Activated naive CD4-positive, alpha-beta T cell treated with anti-CD3 and anti-CD28 coated beads, Interleukin-2, amount 10 ng/mL, durations not matched to agents 7 days and 5 days (primary cell): ENCODE measurements at regions of chr3 and their contacts with region 1.

Region 1: DNA sequence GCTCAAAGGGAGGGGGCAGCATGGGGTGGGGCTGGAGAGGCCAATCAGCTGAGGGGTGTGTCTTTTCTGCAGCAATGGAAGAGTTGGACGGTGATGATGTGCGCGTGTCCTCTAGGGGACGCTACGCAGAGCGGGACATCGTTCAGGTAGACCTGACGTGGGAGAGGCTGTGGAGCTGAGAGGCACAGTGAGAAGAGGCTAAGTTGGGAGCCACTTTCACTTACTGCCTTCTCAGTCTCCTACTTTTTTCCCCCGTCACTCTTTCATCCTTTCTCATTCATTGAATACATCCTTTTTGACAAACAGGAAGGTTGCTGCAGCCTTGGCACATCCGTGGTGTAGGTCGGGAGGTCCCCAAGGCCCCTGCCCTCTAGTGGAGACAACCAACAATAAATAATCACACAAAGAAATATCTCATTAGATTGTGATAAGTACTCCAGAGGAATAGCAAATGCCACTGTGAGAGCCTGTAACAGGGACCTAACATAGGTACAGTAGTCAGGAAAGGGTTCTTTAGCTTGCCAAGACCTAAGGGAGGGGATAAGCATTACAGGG is 4.4 kb upstream of the BRPF1 start:
- DNase-seq: peak; percentile 71
- H3K4me3 Mint-ChIP-seq: peak overlapping the region; percentile 60
- H3K27ac Mint-ChIP-seq: peak overlapping the region; percentile 30
- H3K4me1 Mint-ChIP-seq: peaks cover 31% of the 10 kb centered on the region
- H3K27me3 Mint-ChIP-seq: peaks cover 31% of the 10 kb centered on the region

Region 2: GRCh38 chr3:9224490-9224889 is 502.6 kb before region 1 on chr3:
- CTCF ChIA-PET with region 1: no interaction called
- DNase-seq: peak; percentile 31
- H3K4me3 Mint-ChIP-seq: no peak overlapping the region
- H3K27ac Mint-ChIP-seq: no peak overlapping the region
- H3K4me1 Mint-ChIP-seq: peaks cover 28% of the 10 kb centered on the region
- H3K27me3 Mint-ChIP-seq: no peaks in the 10 kb centered on the region

Region 3: GRCh38 chr3:9503283-9503682 is 223.8 kb before region 1 on chr3:
- CTCF ChIA-PET with region 1: interaction called, 20 read pairs
- DNase-seq: peak; percentile 85
- H3K4me3 Mint-ChIP-seq: no peak overlapping the region
- H3K27ac Mint-ChIP-seq: no peak overlapping the region
- H3K4me1 Mint-ChIP-seq: peaks cover 2% of the 10 kb centered on the region
- H3K27me3 Mint-ChIP-seq: peaks cover 61% of the 10 kb centered on the region

Region 4: GRCh38 chr3:9681723-9682081 is 45.4 kb before region 1 on chr3:
- CTCF ChIA-PET with region 1: no interaction called
- DNase-seq: no peak
- H3K4me3 Mint-ChIP-seq: no peak overlapping the region
- H3K27ac Mint-ChIP-seq: no peak overlapping the region
- H3K4me1 Mint-ChIP-seq: no peaks in the 10 kb centered on the region
- H3K27me3 Mint-ChIP-seq: no peaks in the 10 kb centered on the region

Region 5: GRCh38 chr3:9715764-9716437 is 11.2 kb before region 1 on chr3:
- CTCF ChIA-PET with region 1: interaction called, 15 read pairs
- DNase-seq: peak; percentile 42
- H3K4me3 Mint-ChIP-seq: no peak overlapping the region
- H3K27ac Mint-ChIP-seq: no peak overlapping the region
- H3K4me1 Mint-ChIP-seq: peaks cover 5% of the 10 kb centered on the region
- H3K27me3 Mint-ChIP-seq: peaks cover 22% of the 10 kb centered on the region